GM12878 (cell line): ENCODE measurements at regions of chr10 and their contacts with region 1.

Region 1: DNA sequence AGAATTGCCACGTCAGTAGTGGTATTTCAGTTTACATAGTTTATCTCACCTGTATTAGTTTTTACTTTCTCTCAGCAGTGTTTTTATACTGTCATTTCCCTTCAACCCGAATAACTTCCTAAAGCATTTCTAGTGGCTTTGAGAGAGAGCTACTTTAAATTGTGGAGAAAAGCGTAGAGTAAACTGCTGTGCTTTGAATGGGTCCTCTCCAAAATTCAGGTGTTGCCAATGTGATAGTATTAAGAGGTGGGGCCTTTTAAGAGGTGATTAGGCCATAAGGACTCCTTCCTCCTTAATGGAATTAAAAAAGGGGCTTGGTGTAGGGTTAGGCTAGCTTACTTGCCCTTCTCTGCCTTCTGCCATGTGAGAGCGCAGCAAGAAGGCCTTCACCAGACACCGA is 98.4 kb downstream of the LCOR start:
- DNase-seq: no peak
- ATAC-seq: no peak
- H3K4me3 ChIP-seq: no peak overlapping the region
- H3K27ac ChIP-seq: no peak overlapping the region
- H3K4me1 ChIP-seq: no peaks in the 10 kb centered on the region
- H3K27me3 ChIP-seq: no peaks in the 10 kb centered on the region
- CTCF ChIP-seq: no peak
- EP300 ChIP-seq: no peak
- POLR2A ChIP-seq: no peak
- RAD21 ChIP-seq: no peak

Region 2: GRCh38 chr10:96910488-96911395 is 19.7 kb before region 1 on chr10:
- CTCF ChIA-PET with region 1: interaction called, 12 read pairs
- POLR2A ChIA-PET with region 1: interaction called, 4 read pairs
- RAD21 ChIA-PET with region 1: interaction called, 3 read pairs
- SMC1A ChIA-PET with region 1: interaction called, 6 read pairs
- in situ Hi-C with region 1: no loop called
- intact Hi-C with region 1: no loop called
- DNase-seq: peak; percentile 28
- ATAC-seq: peak; percentile 84
- H3K4me3 ChIP-seq: no peak overlapping the region
- H3K27ac ChIP-seq: peak overlapping the region; percentile 24; the same call in 1 of the 2 replicates
- H3K4me1 ChIP-seq: 0 out of 2 replicates have a peak, but pooled peaks cover 3% of the 10 kb centered on the region
- H3K27me3 ChIP-seq: no peaks in the 10 kb centered on the region
- CTCF ChIP-seq: peak; percentile 65 to 67 (median 66)
- EP300 ChIP-seq: no peak
- POLR2A ChIP-seq: no peak
- RAD21 ChIP-seq: peak; percentile 69